ENCODE measurements at regions of chr17 and their contacts with region 1.

Region 1: DNA sequence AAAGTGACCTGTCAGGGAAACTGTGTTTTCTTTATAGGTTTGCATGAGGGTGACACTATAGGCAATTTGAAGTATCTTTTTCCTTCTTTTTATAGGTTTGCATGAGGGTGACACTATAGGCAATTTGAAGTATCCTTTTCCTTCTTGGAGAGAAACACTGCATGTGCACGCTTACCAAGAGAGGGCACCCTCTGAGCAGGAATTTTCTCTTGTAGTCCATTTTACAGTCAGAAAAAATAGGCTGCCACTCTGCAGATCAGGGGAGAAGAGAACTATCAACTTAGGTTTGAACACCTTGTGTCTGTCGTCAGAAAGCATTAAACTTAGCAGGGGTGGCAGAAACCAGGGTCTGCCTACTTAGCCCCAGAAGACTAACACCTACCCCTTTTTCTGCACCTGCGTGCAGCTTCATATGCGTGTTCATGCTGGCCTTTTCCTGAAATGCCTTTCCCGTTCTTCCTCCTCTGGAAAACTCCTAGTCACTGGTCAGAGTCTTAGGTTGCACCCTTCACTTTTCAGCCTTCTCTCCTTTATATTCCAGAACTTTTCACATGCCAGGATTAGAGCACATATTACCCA is 16.4 kb upstream of the SMIM36 start:
- DNase-seq: peak in 1 of 2 donors; percentile 10
- ATAC-seq: no peak
- H3K4me3 ChIP-seq: no peak overlapping the region
- H3K4me3 Mint-ChIP-seq: no peak overlapping the region
- H3K27ac ChIP-seq: no peak overlapping the region
- H3K27ac Mint-ChIP-seq: no peak overlapping the region
- H3K4me1 ChIP-seq: no peaks in the 10 kb centered on the region
- H3K4me1 Mint-ChIP-seq: no peaks in the 10 kb centered on the region
- H3K27me3 ChIP-seq: no peaks in the 10 kb centered on the region
- H3K27me3 Mint-ChIP-seq: no peaks in the 10 kb centered on the region
- CTCF ChIP-seq: no peak

Region 2: GRCh38 chr17:55224746-55225145 is 302.9 kb before region 1 on chr17:
- intact Hi-C with region 1: no loop called
- DNase-seq: no peak
- ATAC-seq: no peak
- H3K4me3 ChIP-seq: no peak overlapping the region
- H3K4me3 Mint-ChIP-seq: no peak overlapping the region
- H3K27ac ChIP-seq: no peak overlapping the region
- H3K27ac Mint-ChIP-seq: no peak overlapping the region
- H3K4me1 ChIP-seq: no peaks in the 10 kb centered on the region
- H3K4me1 Mint-ChIP-seq: no peaks in the 10 kb centered on the region
- H3K27me3 ChIP-seq: no peaks in the 10 kb centered on the region
- H3K27me3 Mint-ChIP-seq: peaks cover 21 to 23% of the 10 kb centered on the region in 2 donors
- CTCF ChIP-seq: no peak

Region 3: DNA sequence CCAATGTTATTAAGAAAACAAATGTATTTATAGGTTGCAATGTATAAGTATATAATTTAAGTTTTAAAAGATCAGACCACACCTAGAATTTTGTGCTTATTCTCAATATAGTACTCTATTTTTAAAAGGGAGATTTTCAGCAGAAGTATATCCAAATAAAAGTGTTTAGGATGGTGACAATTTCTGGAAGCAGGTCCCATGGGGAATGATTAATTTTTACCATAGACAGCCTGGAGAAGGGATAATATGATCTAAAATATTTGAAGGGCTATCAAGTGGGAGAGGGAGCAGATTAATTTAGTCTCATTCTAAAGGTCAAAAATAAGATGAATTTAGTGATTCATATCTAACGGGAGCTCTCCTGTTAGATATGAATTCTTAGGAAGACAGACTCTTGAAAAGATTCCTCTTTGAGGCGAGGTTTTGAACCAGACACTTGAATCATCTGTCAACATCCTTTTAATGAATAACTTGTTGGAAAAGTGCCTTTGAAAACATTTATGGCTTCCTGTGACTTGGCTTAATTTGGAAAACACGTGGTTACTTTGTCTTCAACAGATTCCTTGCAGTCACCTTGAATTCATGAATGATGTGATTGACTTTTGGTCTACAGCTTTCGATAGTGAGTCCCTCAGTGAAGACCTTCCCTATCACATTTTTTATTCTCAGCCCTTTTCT is 12.9 kb after region 1 on chr17:
- intact Hi-C with region 1: no loop called
- DNase-seq: no peak
- ATAC-seq: no peak
- H3K4me3 ChIP-seq: no peak overlapping the region
- H3K4me3 Mint-ChIP-seq: no peak overlapping the region
- H3K27ac ChIP-seq: no peak overlapping the region
- H3K27ac Mint-ChIP-seq: no peak overlapping the region
- H3K4me1 ChIP-seq: no peaks in the 10 kb centered on the region
- H3K4me1 Mint-ChIP-seq: no peaks in the 10 kb centered on the region
- H3K27me3 ChIP-seq: no peaks in the 10 kb centered on the region
- H3K27me3 Mint-ChIP-seq: peaks cover 6 to 7% of the 10 kb centered on the region in 2 donors
- CTCF ChIP-seq: no peak

Region 4: GRCh38 chr17:55717898-55718735 is 190.5 kb after region 1 on chr17:
- intact Hi-C with region 1: loop called (anchors 2 kb)
- DNase-seq: peak; percentile 31 to 67
- ATAC-seq: peak in 1 of 3 donors; percentile 59
- H3K4me3 ChIP-seq: no peak overlapping the region
- H3K4me3 Mint-ChIP-seq: no peak overlapping the region
- H3K27ac ChIP-seq: no peak overlapping the region
- H3K27ac Mint-ChIP-seq: no peak overlapping the region
- H3K4me1 ChIP-seq: no peaks in the 10 kb centered on the region
- H3K4me1 Mint-ChIP-seq: no peaks in the 10 kb centered on the region
- H3K27me3 ChIP-seq: no peaks in the 10 kb centered on the region
- H3K27me3 Mint-ChIP-seq: peaks cover 15 to 34% of the 10 kb centered on the region in 2 donors
- CTCF ChIP-seq: peak; percentile 75

Region 5: GRCh38 chr17:55770148-55770870 is 242.7 kb after region 1 on chr17:
- intact Hi-C with region 1: loop called (anchors 1 kb)
- DNase-seq: peak in 1 of 2 donors; percentile 27
- ATAC-seq: no peak
- H3K4me3 ChIP-seq: no peak overlapping the region
- H3K4me3 Mint-ChIP-seq: no peak overlapping the region
- H3K27ac ChIP-seq: no peak overlapping the region
- H3K27ac Mint-ChIP-seq: no peak overlapping the region
- H3K4me1 ChIP-seq: no peaks in the 10 kb centered on the region
- H3K4me1 Mint-ChIP-seq: peaks cover 0 to 7% of the 10 kb centered on the region in 2 donors
- H3K27me3 ChIP-seq: no peaks in the 10 kb centered on the region
- H3K27me3 Mint-ChIP-seq: no peaks in the 10 kb centered on the region
- CTCF ChIP-seq: peak; percentile 18

Region 6: GRCh38 chr17:55962951-55963401 is 435.3 kb after region 1 on chr17:
- intact Hi-C with region 1: no loop called
- DNase-seq: no peak
- ATAC-seq: no peak
- H3K4me3 ChIP-seq: no peak overlapping the region
- H3K4me3 Mint-ChIP-seq: no peak overlapping the region
- H3K27ac ChIP-seq: no peak overlapping the region
- H3K27ac Mint-ChIP-seq: no peak overlapping the region
- H3K4me1 ChIP-seq: no peaks in the 10 kb centered on the region
- H3K4me1 Mint-ChIP-seq: no peaks in the 10 kb centered on the region
- H3K27me3 ChIP-seq: no peaks in the 10 kb centered on the region
- H3K27me3 Mint-ChIP-seq: peaks cover 0 to 7% of the 10 kb centered on the region in 2 donors
- CTCF ChIP-seq: no peak

Region 7: GRCh38 chr17:56222255-56222654 is 694.6 kb after region 1 on chr17:
- intact Hi-C with region 1: no loop called
- DNase-seq: no peak
- ATAC-seq: no peak
- H3K4me3 ChIP-seq: no peak overlapping the region
- H3K4me3 Mint-ChIP-seq: no peak overlapping the region
- H3K27ac ChIP-seq: no peak overlapping the region
- H3K27ac Mint-ChIP-seq: no peak overlapping the region
- H3K4me1 ChIP-seq: no peaks in the 10 kb centered on the region
- H3K4me1 Mint-ChIP-seq: no peaks in the 10 kb centered on the region
- H3K27me3 ChIP-seq: no peaks in the 10 kb centered on the region
- H3K27me3 Mint-ChIP-seq: no peaks in the 10 kb centered on the region
- CTCF ChIP-seq: no peak

Region 8: DNA sequence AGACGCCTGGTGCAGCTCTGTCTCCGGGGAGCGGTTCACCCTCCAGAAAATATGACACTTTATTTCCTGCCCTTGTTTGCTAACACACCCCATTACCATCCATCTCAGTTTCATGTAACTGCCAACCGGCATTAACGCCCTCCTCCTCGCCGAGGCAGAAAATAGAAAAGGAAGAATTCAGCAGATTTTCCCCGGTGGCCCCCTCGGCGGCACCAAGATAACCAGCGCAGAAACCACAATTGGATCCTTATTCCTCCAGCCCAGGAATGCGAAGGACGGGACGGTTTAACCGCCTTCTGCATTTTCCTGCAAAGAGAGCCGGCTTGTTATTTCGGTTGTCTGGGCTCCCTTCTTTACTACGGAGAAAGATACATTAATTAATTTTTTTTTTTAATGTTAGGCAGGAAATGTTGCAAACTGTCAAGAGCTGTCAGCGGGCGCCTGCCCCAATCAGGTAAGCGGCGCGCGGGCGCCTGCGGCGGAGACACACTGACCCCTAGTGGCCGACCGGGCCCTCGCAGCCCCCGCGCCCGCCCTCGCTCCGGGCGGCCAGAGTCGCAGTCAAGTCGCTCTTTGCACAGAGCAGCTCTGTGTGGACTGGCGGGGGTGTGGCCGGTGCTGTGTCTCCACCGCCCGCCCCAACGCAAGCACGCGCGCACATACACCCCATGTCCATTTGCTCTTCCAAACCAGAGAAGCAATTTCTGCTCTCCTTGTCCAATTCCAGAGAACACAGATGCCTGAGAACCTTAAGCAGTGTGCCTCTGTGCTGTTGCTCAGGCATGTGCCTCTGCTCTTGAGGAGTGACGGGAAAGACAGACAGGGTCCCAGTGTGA is 1252.5 kb after region 1 on chr17:
- intact Hi-C with region 1: loop called (anchors 1 kb)
- DNase-seq: peak; percentile 84 to 92
- ATAC-seq: peak; percentile 98 to 100 (median 99)
- H3K4me3 ChIP-seq: peak overlapping the region; percentile 2
- H3K4me3 Mint-ChIP-seq: peak overlapping the region; percentile 89
- H3K27ac ChIP-seq: no peak overlapping the region
- H3K27ac Mint-ChIP-seq: peak overlapping the region in 1 of 2 donors; percentile 72
- H3K4me1 ChIP-seq: peaks cover 10% of the 10 kb centered on the region
- H3K4me1 Mint-ChIP-seq: peaks cover 18 to 19% of the 10 kb centered on the region in 2 donors
- H3K27me3 ChIP-seq: peaks cover 16% of the 10 kb centered on the region
- H3K27me3 Mint-ChIP-seq: peaks cover 49 to 58% of the 10 kb centered on the region in 2 donors
- CTCF ChIP-seq: peak; percentile 98